ENCODE measurements at regions of chr11 and their contacts with region 1.

Region 1: GRCh38 chr11:93225662-93226061 is 27.9 kb upstream of the SLC36A4 start:
- DNase-seq: peak; percentile 17
- CTCF ChIP-seq: peak; percentile 10

Region 2: GRCh38 chr11:93213622-93214021 is 12.0 kb before region 1 on chr11:
- CTCF ChIA-PET with region 1: interaction called, 13 read pairs
- POLR2A ChIA-PET with region 1: no interaction called
- DNase-seq: no peak
- CTCF ChIP-seq: no peak